Endothelial cell of umbilical vein (primary cell): ENCODE measurements at regions of chr18 and their contacts with region 1.

Region 1: GRCh38 chr18:42586601-42587000 is 528.9 kb downstream of the RIT2 start:
- DNase-seq: no peak
- H3K4me3 ChIP-seq: no peak overlapping the region
- H3K27ac ChIP-seq: no peak overlapping the region
- H3K4me1 ChIP-seq: no peaks in the 10 kb centered on the region
- H3K27me3 ChIP-seq: no peaks in the 10 kb centered on the region
- CTCF ChIP-seq: no peak
- POLR2A ChIP-seq: no peak

Region 2: DNA sequence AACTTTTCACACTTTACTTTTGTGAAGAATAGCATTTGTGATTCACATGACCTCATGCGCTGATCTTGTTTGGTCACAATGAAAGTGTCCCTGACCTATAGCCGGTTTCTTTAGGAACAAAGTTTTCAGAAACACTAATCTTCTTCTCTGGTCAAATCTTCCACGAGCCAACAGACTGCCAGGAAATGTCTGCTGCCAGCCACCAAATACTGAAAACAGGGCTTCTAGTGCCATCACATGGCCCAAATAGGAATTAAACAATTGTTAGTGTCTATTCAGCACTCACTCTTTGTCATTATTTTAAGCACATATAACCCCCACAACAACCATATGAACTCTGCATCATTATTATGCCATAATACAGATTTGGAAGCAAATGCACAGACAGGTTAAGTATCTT is 977.2 kb after region 1 on chr18:
- CTCF ChIA-PET with region 1: no interaction called
- POLR2A ChIA-PET with region 1: no interaction called
- dilution Hi-C with region 1: no loop called
- intact Hi-C with region 1: loop called (anchors 10 kb)
- DNase-seq: peak; percentile 48
- H3K4me3 ChIP-seq: no peak overlapping the region
- H3K27ac ChIP-seq: no peak overlapping the region
- H3K4me1 ChIP-seq: no peaks in the 10 kb centered on the region
- H3K27me3 ChIP-seq: no peaks in the 10 kb centered on the region
- CTCF ChIP-seq: no peak
- POLR2A ChIP-seq: no peak

Region 3: DNA sequence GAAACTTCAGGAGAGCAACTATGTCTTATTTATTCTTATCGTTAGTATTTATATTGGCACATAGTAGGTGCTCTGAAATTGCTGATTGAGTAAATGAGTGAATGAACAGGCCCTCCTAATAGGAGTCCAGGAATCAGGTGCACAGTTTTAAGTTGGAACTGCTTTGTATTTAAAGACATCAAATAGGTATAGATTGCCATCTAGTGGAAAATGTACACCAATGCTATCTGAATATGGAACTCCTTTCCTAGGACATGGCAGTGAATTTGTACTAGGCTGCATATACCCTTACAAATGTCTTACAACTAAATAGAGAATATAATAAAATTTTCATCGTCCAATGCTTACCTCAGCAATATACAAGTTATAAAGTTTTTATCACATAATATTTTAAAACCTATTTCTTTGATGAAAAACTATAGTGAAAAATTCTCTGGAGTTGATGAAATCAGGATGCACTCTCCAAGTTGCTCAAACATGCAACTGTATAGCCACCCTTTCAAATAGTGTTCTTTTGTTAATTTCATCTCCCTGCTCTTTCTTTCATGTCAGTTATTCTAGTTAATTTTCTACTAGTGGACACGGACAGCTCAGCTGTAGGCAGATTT is 1009.6 kb after region 1 on chr18:
- CTCF ChIA-PET with region 1: no interaction called
- POLR2A ChIA-PET with region 1: no interaction called
- dilution Hi-C with region 1: no loop called
- intact Hi-C with region 1: loop called (anchors 10 kb)
- DNase-seq: peak; percentile 33
- H3K4me3 ChIP-seq: no peak overlapping the region
- H3K27ac ChIP-seq: no peak overlapping the region
- H3K4me1 ChIP-seq: no peaks in the 10 kb centered on the region
- H3K27me3 ChIP-seq: no peaks in the 10 kb centered on the region
- CTCF ChIP-seq: peak; percentile 15 to 35
- POLR2A ChIP-seq: no peak